ENCODE measurements at regions of chr15 and their contacts with region 1.

Region 1: GRCh38 chr15:93072411-93073394 is 16.3 kb downstream of the RGMA start:
- DNase-seq: peak; percentile 83 to 86
- ATAC-seq: peak; percentile 40 to 55
- H3K4me3 ChIP-seq: peak overlapping the region; percentile 64 to 93 (median 74)
- H3K27ac ChIP-seq: peak overlapping the region; percentile 94 to 98 (median 96)
- H3K4me1 ChIP-seq: peaks cover 78 to 88% of the 10 kb centered on the region in 2 donors
- H3K27me3 ChIP-seq: no peaks in the 10 kb centered on the region
- CTCF ChIP-seq: peak in 1 of 5 experiments; percentile 8
- POLR2A ChIP-seq: peak; percentile 95 to 97

Region 2: DNA sequence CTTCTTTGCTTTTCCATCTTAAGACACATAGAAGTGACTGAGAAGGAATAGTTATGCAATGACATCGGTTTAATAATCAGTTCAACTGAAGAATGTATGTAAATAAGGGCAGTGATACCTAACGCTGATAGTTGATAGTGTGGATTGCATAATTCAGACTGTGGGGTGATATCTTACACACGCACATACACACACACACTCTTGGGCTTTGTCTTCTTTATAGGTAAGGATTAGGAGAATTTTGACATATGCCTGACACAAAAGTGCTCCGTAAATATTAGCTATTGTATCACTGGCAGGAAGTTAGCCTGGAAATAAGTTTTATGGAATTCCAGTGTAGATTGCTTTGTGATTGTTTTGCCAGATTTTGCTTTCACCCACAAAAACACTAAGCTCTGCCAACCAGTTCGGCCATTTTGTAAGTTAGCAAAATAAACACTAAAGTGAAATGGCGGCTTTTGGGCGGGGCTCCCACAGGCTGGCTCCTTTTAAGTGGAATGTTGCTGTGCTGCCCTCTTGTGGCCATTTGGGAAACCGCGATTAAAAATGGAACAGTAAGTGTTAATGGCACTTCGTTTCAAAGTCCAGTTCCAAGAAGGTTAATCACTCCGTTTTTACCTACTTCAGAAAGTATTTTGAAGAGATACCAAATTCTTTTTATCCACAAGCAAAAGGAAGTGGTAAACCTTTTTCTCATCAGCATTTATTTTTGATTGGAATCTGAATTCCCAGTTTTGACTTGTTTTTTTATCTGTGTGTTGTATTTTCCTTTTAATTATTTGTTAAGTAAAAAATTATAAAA is 154.9 kb before region 1 on chr15:
- in situ Hi-C with region 1: no loop called
- intact Hi-C with region 1: loop called (anchors 5 kb)
- DNase-seq: peak; percentile 87 to 94
- ATAC-seq: peak; percentile 57 to 64
- H3K4me3 ChIP-seq: peak overlapping the region; percentile 3 to 21 (median 12)
- H3K27ac ChIP-seq: peak overlapping the region; percentile 91 to 97 (median 96)
- H3K4me1 ChIP-seq: peaks cover 86 to 91% of the 10 kb centered on the region in 2 donors
- H3K27me3 ChIP-seq: no peaks in the 10 kb centered on the region
- CTCF ChIP-seq: peak; percentile 88 to 98 (median 95)
- POLR2A ChIP-seq: no peak

Region 3: DNA sequence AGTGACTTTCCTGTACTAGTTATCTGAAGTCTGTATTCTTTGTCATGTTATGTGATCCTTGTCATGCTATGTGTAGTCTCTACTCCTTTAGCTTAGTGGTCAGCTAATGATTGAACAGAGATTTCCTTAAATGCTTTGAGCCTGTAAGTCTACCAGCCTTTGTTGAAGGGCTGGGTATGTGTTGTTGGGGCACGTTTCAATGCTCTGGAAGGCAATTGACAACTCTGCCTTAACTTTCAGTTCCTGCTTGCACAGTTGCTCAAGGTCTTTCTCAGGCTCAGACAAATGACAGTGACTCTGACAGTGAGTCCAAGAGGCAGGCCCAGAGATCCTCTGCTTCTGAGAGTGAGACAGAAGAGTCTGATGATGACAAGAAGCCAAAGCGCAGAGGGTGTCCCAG is 83.2 kb before region 1 on chr15:
- in situ Hi-C with region 1: no loop called
- intact Hi-C with region 1: no loop called
- DNase-seq: no peak
- ATAC-seq: peak in 1 of 2 donors; percentile 16
- H3K4me3 ChIP-seq: no peak overlapping the region
- H3K27ac ChIP-seq: peak overlapping the region; percentile 74 to 92 (median 84)
- H3K4me1 ChIP-seq: peaks cover 27 to 37% of the 10 kb centered on the region in 2 donors
- H3K27me3 ChIP-seq: no peaks in the 10 kb centered on the region
- CTCF ChIP-seq: no peak
- POLR2A ChIP-seq: no peak

Region 4: DNA sequence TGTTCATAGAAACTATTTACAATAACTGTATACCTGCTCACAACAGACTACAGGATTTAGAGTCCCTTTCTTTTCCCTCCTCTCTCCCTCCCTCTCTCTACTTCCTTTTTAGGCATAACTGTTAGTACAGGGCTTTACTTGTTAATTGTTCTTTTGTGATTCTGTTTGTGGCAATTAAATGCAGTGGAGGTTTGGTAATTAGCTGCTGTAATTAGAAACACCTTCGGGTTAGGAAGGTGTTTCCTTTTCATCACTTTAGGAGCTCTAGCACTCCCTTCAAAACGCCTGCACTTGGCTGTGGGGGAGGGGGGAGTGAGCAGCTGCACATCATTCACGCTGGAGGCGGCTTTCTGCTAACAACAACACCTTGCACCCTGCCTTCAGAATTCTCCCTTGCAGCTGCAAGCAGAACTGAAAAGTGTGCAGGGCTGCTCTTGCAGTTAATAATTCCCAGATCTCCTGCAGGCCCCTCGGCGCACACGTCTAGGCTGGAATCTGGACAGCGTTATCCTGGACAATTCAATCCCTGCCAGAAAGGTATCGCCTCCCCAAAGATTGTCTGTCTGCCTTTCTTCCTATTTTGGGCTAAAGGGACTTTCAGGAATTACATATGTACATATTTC is 259.0 kb after region 1 on chr15:
- in situ Hi-C with region 1: no loop called
- intact Hi-C with region 1: no loop called
- DNase-seq: no peak
- ATAC-seq: no peak
- H3K4me3 ChIP-seq: no peak overlapping the region
- H3K27ac ChIP-seq: no peak overlapping the region
- H3K4me1 ChIP-seq: no peaks in the 10 kb centered on the region
- H3K27me3 ChIP-seq: peaks cover 0 to 2% (median 0%) of the 10 kb centered on the region in 3 donors
- CTCF ChIP-seq: no peak
- POLR2A ChIP-seq: no peak

Region 5: DNA sequence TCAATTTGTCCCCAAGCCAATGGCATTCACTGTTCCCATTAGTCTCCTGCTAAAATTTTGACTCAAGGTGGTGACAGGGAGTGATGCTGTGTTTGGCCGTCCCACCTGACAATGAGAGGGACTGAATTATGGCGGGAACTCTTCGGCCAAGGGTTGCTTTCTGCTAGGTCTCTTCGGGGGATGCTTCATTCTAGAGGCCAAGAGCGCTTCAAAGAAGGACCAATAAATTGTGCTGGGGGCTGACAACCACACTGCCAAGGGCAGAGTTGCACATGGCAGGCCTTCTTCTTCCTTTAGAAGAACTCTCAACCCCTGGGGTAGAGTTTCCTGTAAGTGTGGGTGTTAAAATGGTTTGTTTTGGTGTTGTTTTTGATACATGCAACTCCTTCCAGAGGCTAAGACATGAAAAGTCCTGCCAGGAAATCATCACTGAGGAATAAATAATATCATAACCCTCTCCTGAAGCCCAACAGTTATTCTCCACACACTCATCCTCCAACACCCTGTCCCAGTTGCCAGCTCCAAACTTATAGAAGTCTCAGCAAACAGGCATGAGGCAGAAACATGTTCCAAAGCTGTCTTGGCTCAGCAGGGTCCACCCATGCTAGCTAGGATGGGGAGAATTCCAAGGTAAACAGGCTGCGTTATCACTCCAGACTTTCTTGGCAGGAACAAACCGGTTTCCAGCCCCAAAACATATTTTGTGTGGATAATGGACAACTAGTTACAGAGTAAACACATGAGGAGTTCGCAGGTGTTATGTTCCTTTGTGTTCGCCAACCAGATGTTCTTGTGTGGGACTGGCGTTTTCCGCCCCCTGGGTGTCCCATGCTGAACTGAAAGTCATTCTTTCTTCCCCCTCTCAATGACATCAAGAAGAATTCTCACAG is 413.0 kb after region 1 on chr15:
- in situ Hi-C with region 1: no loop called
- intact Hi-C with region 1: no loop called
- DNase-seq: peak; percentile 52 to 80
- ATAC-seq: peak; percentile 67 to 77
- H3K4me3 ChIP-seq: no peak overlapping the region
- H3K27ac ChIP-seq: peak overlapping the region; percentile 80 to 87 (median 82)
- H3K4me1 ChIP-seq: peaks cover 26 to 29% of the 10 kb centered on the region in 2 donors
- H3K27me3 ChIP-seq: no peaks in the 10 kb centered on the region
- CTCF ChIP-seq: peak in 2 of 5 experiments; percentile 31 to 39
- POLR2A ChIP-seq: no peak

Region 6: GRCh38 chr15:93997084-93997918 is 924.6 kb after region 1 on chr15:
- in situ Hi-C with region 1: loop called in 1 of 4 experiments (anchors 25 kb)
- intact Hi-C with region 1: no loop called
- DNase-seq: no peak
- ATAC-seq: no peak
- H3K4me3 ChIP-seq: no peak overlapping the region
- H3K27ac ChIP-seq: no peak overlapping the region
- H3K4me1 ChIP-seq: peaks cover 0 to 15% of the 10 kb centered on the region in 2 donors
- H3K27me3 ChIP-seq: no peaks in the 10 kb centered on the region
- CTCF ChIP-seq: peak in 4 of 5 experiments; percentile 18 to 57 (median 39)
- POLR2A ChIP-seq: no peak